ENCODE measurements at regions of chr20 and their contacts with region 1.

Region 1: GRCh38 chr20:64062596-64063388 is at the start of gene TCEA2:
- DNase-seq: peak; percentile 84 to 97 (median 93)
- ATAC-seq: peak; percentile 94
- H3K4me3 ChIP-seq: peak within 1 kb of the TSS; percentile 47 to 68
- H3K4me3 Mint-ChIP-seq: peak within 1 kb of the TSS; percentile 82
- H3K27ac ChIP-seq: peak within 1 kb of the TSS; percentile 42 to 67
- H3K27ac Mint-ChIP-seq: peak within 1 kb of the TSS; percentile 63
- H3K4me1 ChIP-seq: peaks cover 48% of the 10 kb centered on the region
- H3K4me1 Mint-ChIP-seq: peaks cover 36% of the 10 kb centered on the region
- H3K27me3 ChIP-seq: no peaks in the 10 kb centered on the region
- H3K27me3 Mint-ChIP-seq: no peaks in the 10 kb centered on the region
- CTCF ChIP-seq: no peak
- total RNA-seq, gene TCEA2: 18.2 to 18.4 TPM

Region 2: DNA sequence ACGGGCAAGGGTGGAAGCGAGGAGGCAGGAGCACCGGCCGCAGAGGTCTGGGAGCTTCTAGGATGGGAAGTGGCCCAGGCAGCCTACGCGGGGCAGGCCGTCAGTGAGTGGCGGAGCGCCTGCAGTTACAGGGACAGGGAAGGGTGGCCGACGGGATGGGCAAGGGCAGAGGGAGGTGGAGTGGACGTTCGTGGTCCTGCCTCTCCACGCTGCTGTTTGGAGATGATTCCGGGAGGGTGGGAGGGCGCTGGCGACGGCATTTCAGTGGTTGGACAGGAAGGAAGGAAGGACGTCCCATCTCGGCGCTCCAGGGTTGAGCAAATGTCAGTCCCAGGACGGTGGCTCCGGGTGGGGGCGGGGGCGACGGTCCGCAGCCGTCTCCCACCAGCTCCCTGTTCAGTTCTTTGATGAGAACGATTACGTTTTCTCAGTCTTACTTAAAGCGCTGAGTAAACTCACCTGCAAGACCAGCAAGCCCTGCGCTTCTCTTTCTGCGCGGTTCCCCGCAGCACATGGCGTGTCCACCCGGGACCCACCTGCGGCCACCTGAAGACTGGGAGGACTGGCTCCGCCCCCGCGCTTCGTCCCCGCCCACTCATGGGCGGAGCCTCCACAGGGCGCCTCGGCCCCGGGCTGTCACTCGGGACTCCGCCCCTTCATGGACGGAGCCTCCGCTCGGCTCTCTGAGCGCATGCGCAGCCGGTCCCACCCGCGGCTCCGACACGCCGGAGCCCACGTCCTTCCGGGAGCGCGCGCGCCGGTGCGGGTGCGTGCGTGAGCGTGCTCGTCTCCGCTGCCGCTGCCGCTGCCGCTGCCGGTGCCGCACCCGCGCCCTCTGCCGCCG is 168.2 kb before region 1 on chr20 and contains the start of gene DNAJC5:
- CTCF ChIA-PET with region 1: no interaction called
- POLR2A ChIA-PET with region 1: no interaction called
- intact Hi-C with region 1: loop called (anchors 2 to 5 kb)
- DNase-seq: peak; percentile 93 to 99 (median 97)
- ATAC-seq: peak; percentile 92
- H3K4me3 ChIP-seq: peak within 1 kb of the TSS; percentile 46 to 66
- H3K4me3 Mint-ChIP-seq: peak within 1 kb of the TSS; percentile 95
- H3K27ac ChIP-seq: peak within 1 kb of the TSS; percentile 55 to 65
- H3K27ac Mint-ChIP-seq: peak within 1 kb of the TSS; percentile 96
- H3K4me1 ChIP-seq: peaks cover 41% of the 10 kb centered on the region
- H3K4me1 Mint-ChIP-seq: peaks cover 44% of the 10 kb centered on the region
- H3K27me3 ChIP-seq: no peaks in the 10 kb centered on the region
- H3K27me3 Mint-ChIP-seq: no peaks in the 10 kb centered on the region
- CTCF ChIP-seq: no peak
- total RNA-seq, gene DNAJC5: 24.3 TPM

Region 3: DNA sequence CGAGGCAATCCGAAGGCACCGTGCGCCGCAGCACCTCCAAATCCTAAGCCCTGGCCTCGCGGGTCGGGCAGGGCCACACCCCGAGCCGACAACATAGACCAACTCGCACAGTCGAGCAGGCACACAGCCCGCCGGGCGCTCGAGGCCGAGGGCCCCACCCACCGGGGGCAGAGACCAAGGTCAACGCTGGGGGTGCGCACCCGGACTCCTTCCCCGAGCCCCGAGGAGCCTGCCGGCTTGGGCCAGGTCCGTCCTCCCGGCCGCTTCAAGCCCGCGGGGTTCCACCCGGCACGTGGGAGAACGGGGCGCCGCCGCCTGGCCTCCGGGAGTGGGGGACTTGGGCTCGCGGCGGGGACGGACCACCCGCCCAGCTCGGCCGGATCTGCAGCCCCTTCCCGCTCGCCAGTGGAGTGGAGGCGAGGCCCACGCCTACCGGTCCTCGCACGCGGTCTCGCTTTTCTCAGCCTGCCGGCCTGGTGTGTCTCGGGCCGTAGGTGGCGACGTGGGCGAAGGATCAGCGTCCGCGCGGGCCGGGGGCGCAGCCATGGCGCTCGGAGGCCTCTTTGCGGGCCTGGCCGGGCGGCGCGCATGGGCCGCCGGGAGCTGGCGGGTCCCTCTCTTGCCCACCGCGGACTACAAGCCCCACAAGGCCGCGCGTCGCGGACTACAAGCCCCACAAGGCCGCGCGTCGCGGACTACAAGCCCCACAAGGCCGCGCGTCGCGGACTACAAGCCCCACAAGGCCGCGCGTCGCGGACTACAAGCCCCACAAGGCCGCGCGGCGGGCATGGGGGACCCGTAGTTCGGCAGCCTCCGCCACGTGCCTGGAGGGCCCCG is 106.7 kb before region 1 on chr20 and contains the start of gene UCKL1:
- CTCF ChIA-PET with region 1: no interaction called
- POLR2A ChIA-PET with region 1: no interaction called
- intact Hi-C with region 1: loop called (anchors 1 kb)
- DNase-seq: peak; percentile 78 to 93 (median 89)
- ATAC-seq: peak; percentile 81
- H3K4me3 ChIP-seq: peak within 1 kb of the TSS; percentile 73 to 95
- H3K4me3 Mint-ChIP-seq: peak within 1 kb of the TSS; percentile 82
- H3K27ac ChIP-seq: peak within 1 kb of the TSS; percentile 64 to 77
- H3K27ac Mint-ChIP-seq: peak within 1 kb of the TSS; percentile 76
- H3K4me1 ChIP-seq: peaks cover 28% of the 10 kb centered on the region
- H3K4me1 Mint-ChIP-seq: peaks cover 34% of the 10 kb centered on the region
- H3K27me3 ChIP-seq: no peaks in the 10 kb centered on the region
- H3K27me3 Mint-ChIP-seq: no peaks in the 10 kb centered on the region
- CTCF ChIP-seq: no peak
- total RNA-seq, gene UCKL1: 29.6 to 33.7 TPM

Region 4: DNA sequence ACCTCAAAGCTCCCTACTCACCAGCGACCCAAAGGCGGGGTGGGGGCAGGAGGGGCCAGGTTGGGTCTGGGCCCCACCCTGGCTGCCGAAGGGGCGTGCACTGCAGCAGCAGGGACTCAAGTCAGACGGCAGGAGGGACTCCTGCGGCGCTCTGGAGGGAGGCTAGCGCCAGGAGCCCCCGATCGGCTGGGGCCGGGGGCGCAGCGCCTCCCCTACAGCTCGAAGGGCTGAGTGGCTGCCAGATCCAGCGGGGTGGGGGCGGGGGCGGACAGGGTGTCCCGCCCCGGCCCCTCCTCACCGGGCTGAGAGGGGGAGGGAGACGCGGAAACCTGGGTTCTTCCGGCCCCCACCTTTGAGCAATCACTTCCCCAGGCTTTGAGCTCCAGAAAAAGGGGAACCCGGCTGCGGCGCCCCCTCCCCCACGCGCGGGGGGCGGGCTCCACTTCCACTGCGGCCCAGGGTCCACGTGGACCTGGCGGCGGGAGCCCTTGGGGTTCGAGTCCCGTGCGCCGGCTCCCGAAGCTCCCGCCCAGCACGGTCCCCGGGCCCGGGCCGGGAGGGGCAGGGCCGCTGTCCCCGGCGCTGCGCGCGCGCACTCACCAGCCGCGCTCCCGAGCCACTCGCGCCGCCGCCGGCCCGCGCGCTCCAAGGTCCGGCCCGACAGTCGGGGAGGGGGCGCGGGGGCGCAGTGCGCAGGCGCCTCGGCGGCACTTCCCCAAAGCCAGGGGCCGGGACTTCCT is 16.7 kb after region 1 on chr20 and contains the start of gene RGS19:
- CTCF ChIA-PET with region 1: interaction called, 6 read pairs
- POLR2A ChIA-PET with region 1: interaction called, 7 read pairs
- intact Hi-C with region 1: loop called (anchors 1 kb)
- DNase-seq: peak in 8 of 9 experiments; percentile 50 to 85 (median 69)
- ATAC-seq: peak; percentile 32
- H3K4me3 ChIP-seq: peak within 1 kb of the TSS; percentile 85 to 95
- H3K4me3 Mint-ChIP-seq: peak within 1 kb of the TSS; percentile 87
- H3K27ac ChIP-seq: peak within 1 kb of the TSS; percentile 66 to 77
- H3K27ac Mint-ChIP-seq: peak within 1 kb of the TSS; percentile 90
- H3K4me1 ChIP-seq: peaks cover 57% of the 10 kb centered on the region
- H3K4me1 Mint-ChIP-seq: peaks cover 39% of the 10 kb centered on the region
- H3K27me3 ChIP-seq: peaks cover 0 to 1% of the 10 kb centered on the region in 2 experiments
- H3K27me3 Mint-ChIP-seq: peaks cover 2% of the 10 kb centered on the region
- CTCF ChIP-seq: no peak
- total RNA-seq, gene RGS19: 6.9 to 8.1 TPM

Region 5: GRCh38 chr20:64091770-64092169 is 29.0 kb after region 1 on chr20:
- CTCF ChIA-PET with region 1: no interaction called
- POLR2A ChIA-PET with region 1: no interaction called
- intact Hi-C with region 1: no loop called
- DNase-seq: no peak
- ATAC-seq: no peak
- H3K4me3 ChIP-seq: no peak overlapping the region
- H3K4me3 Mint-ChIP-seq: no peak overlapping the region
- H3K27ac ChIP-seq: no peak overlapping the region
- H3K27ac Mint-ChIP-seq: no peak overlapping the region
- H3K4me1 ChIP-seq: no peaks in the 10 kb centered on the region
- H3K4me1 Mint-ChIP-seq: peaks cover 2% of the 10 kb centered on the region
- H3K27me3 ChIP-seq: no peaks in the 10 kb centered on the region
- H3K27me3 Mint-ChIP-seq: peaks cover 4% of the 10 kb centered on the region
- CTCF ChIP-seq: no peak

Measured in CD8-positive, alpha-beta T cell (primary cell).